ENCODE measurements at regions of chr14 and their contacts with region 1.

Region 1: GRCh38 chr14:103391048-103391447 is 5.8 kb downstream of the MARK3 start:
- DNase-seq: peak; percentile 74
- ATAC-seq: peak; percentile 63
- H3K4me3 Mint-ChIP-seq: no peak overlapping the region
- H3K27ac Mint-ChIP-seq: no peak overlapping the region
- H3K4me1 Mint-ChIP-seq: peaks cover 53% of the 10 kb centered on the region
- H3K27me3 Mint-ChIP-seq: no peaks in the 10 kb centered on the region

Region 2: GRCh38 chr14:103281496-103282231 is 109.4 kb before region 1 on chr14:
- CTCF ChIA-PET with region 1: no interaction called
- POLR2A ChIA-PET with region 1: no interaction called
- DNase-seq: no peak
- ATAC-seq: no peak
- H3K4me3 Mint-ChIP-seq: no peak overlapping the region
- H3K27ac Mint-ChIP-seq: no peak overlapping the region
- H3K4me1 Mint-ChIP-seq: peaks cover 8% of the 10 kb centered on the region
- H3K27me3 Mint-ChIP-seq: peaks cover 57% of the 10 kb centered on the region

Region 3: DNA sequence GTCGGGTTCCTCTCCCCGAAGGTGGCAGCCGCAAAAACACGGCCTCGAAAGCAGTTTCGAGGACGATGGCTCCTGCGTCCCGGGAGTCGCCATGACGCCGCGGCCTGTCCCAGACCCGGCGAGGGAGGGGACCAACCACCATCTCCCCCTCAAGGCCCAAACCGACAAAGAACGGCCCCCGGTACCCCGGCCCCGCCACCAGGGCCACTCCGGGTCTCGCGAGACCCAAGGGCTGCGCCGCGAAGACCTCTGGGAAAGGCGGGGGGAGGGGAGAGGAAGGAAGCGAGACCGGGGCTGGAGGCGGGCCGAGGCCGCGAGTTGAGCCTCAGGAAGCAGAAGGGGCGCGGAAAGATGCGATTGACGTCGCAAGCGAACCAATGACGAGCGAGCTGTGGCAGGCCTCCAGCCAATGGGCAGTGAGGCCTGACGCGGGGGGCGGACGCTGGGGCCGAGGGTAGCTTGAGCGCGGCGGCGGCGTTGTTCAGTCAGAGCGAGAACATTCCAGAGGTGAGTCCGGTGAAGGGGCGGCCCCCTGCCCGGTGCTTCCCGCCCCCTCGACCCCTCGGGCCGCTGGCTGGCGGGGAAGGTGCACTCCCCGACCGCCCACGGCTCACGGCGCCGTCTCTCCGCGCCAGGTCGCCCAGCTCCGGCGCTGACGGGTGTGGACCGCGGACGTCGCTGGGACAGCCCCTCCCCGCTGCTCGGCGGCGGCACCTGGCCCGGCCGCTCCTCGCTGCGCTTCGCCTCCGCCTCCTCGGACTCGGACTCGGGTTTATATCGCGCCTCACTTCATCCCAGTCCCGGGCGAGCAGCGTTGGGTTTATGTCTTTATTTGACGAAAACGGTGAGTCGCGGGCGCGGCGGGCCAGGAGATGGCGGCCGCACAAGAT is 57.0 kb before region 1 on chr14 and contains the start of gene EIF5:
- CTCF ChIA-PET with region 1: interaction called, 24 read pairs
- POLR2A ChIA-PET with region 1: interaction called, 11 read pairs
- DNase-seq: peak; percentile 99
- ATAC-seq: peak; percentile 95
- H3K4me3 Mint-ChIP-seq: peak within 1 kb of the TSS; percentile 82
- H3K27ac Mint-ChIP-seq: peak within 1 kb of the TSS; percentile 97
- H3K4me1 Mint-ChIP-seq: peaks cover 36% of the 10 kb centered on the region
- H3K27me3 Mint-ChIP-seq: peaks cover 2% of the 10 kb centered on the region
- total RNA-seq, gene EIF5: 240 to 241 TPM

Region 4: DNA sequence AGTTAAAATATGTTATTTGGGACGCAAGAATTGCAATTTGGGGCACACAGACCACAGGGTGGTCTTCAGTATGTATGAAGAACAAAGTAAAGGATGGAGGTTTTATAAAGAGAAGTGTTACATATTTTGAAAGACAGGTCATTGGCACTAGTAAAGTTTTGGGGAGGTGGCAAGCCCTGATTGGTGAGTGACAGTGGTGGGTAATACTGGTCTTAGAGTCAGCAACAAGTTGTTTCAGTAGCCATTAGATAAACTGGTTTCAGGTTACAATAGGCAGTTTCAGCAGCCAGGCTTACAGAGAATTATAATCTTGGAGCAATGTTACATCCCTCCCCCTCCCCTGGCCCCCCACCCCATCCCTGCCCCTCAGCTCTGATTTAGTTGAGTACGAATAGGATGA is 11.6 kb after region 1 on chr14:
- CTCF ChIA-PET with region 1: interaction called, 17 read pairs
- POLR2A ChIA-PET with region 1: interaction called, 4 read pairs
- DNase-seq: no peak
- ATAC-seq: no peak
- H3K4me3 Mint-ChIP-seq: no peak overlapping the region
- H3K27ac Mint-ChIP-seq: no peak overlapping the region
- H3K4me1 Mint-ChIP-seq: peaks cover 51% of the 10 kb centered on the region
- H3K27me3 Mint-ChIP-seq: no peaks in the 10 kb centered on the region

Region 5: GRCh38 chr14:103418481-103418818 is 27.4 kb after region 1 on chr14:
- CTCF ChIA-PET with region 1: interaction called, 55 read pairs
- POLR2A ChIA-PET with region 1: no interaction called
- DNase-seq: no peak
- ATAC-seq: no peak
- H3K4me3 Mint-ChIP-seq: no peak overlapping the region
- H3K27ac Mint-ChIP-seq: no peak overlapping the region
- H3K4me1 Mint-ChIP-seq: peaks cover 22% of the 10 kb centered on the region
- H3K27me3 Mint-ChIP-seq: no peaks in the 10 kb centered on the region

Region 6: DNA sequence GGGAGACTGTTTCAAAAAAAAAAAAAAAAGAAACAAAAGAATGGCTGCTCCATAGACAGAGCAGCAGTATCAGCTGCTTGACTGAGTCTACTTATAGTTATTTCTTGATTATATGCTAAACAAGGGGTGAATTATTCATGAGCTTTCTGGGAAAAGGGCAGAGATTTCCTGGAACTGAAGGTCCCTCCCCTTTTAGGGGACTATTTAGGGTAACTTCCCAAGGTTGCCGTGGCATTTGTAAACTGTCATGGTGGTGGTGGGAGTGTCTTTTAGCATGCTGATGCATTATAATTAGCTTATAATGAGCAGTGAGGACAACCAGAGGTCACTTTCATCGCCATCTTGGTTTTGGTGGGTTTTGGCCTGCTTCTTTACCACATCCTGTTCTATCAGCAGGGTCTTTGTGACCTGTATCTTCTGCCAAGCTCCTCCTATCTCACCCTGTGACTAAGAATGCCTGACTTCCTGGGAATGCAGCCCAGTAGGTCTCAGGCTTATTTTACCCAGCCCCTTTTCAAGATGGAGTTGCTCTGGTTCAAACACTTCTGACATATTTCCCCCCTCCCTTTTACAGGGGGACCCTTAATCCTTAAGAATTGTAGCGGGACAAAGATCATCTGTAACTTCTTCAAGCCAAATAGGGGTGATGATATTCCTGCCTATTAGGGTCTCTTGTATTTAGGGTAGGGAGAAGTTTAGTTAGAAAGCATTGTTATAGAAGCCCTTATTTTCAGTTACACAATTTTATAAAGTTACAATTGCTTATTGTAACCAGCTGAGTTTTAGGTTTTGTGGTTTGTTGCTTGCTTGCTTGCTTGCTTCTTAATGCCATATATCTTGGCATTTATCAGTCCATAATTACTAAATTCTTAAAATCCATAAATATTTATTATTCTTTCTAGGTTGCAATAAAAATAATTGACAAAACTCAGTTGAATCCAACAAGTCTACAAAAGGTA is 36.7 kb after region 1 on chr14:
- CTCF ChIA-PET with region 1: interaction called, 11 read pairs
- POLR2A ChIA-PET with region 1: no interaction called
- DNase-seq: peak; percentile 62
- ATAC-seq: peak; percentile 60
- H3K4me3 Mint-ChIP-seq: no peak overlapping the region
- H3K27ac Mint-ChIP-seq: peak overlapping the region; percentile 86
- H3K4me1 Mint-ChIP-seq: peaks cover 25% of the 10 kb centered on the region
- H3K27me3 Mint-ChIP-seq: no peaks in the 10 kb centered on the region